ENCODE measurements at regions of chr12 and their contacts with region 1.

Region 1: GRCh38 chr12:51238510-51239334 is at the start of gene DAZAP2:
- DNase-seq: peak; percentile 98
- H3K4me3 ChIP-seq: peak within 1 kb of the TSS; percentile 96 to 100 (median 97)
- H3K27ac ChIP-seq: peak within 1 kb of the TSS; percentile 99 to 100 (median 100)
- H3K4me1 ChIP-seq: peaks cover 0 to 28% (median 22%) of the 10 kb centered on the region in 4 donors
- H3K27me3 ChIP-seq: no peaks in the 10 kb centered on the region
- CTCF ChIP-seq: peak in 2 of 4 experiments; percentile 28 to 39
- EP300 ChIP-seq: peak in 1 of 4 donors; percentile 36
- POLR2A ChIP-seq: peak; percentile 94
- total RNA-seq, gene DAZAP2: 107 to 265 (median 191) TPM

Region 2: GRCh38 chr12:51172515-51173431 is 65.9 kb before region 1 on chr12 and contains the start of gene TFCP2:
- intact Hi-C with region 1: loop called (anchors 2 kb)
- DNase-seq: peak; percentile 99
- H3K4me3 ChIP-seq: peak within 1 kb of the TSS; percentile 64 to 86 (median 75)
- H3K27ac ChIP-seq: peak within 1 kb of the TSS; percentile 93 to 98 (median 96)
- H3K4me1 ChIP-seq: peaks cover 0 to 27% (median 18%) of the 10 kb centered on the region in 4 donors
- H3K27me3 ChIP-seq: no peaks in the 10 kb centered on the region
- CTCF ChIP-seq: no peak
- EP300 ChIP-seq: peak in 1 of 4 donors; percentile 13
- POLR2A ChIP-seq: peak; percentile 43 to 62
- total RNA-seq, gene TFCP2: 11.9 to 17.8 (median 13.7) TPM